Aorta (tissue), 5 donors: ENCODE measurements at regions of chr10 and their contacts with region 1.

Region 1: GRCh38 chr10:113441220-113441619 is 111.6 kb upstream of the HABP2 start:
- DNase-seq: no peak
- ATAC-seq: no peak
- H3K4me3 ChIP-seq: no peak overlapping the region
- H3K27ac ChIP-seq: no peak overlapping the region
- H3K4me1 ChIP-seq: no peaks in the 10 kb centered on the region
- H3K27me3 ChIP-seq: no peaks in the 10 kb centered on the region

Region 2: GRCh38 chr10:113397047-113397446 is 44.2 kb before region 1 on chr10:
- intact Hi-C with region 1: no loop called
- DNase-seq: no peak
- ATAC-seq: no peak
- H3K4me3 ChIP-seq: no peak overlapping the region
- H3K27ac ChIP-seq: no peak overlapping the region
- H3K4me1 ChIP-seq: no peaks in the 10 kb centered on the region
- H3K27me3 ChIP-seq: no peaks in the 10 kb centered on the region

Region 3: GRCh38 chr10:113515601-113516000 is 74.4 kb after region 1 on chr10:
- intact Hi-C with region 1: no loop called
- DNase-seq: no peak
- ATAC-seq: no peak
- H3K4me3 ChIP-seq: no peak overlapping the region
- H3K27ac ChIP-seq: no peak overlapping the region
- H3K4me1 ChIP-seq: peaks cover 3 to 4% of the 10 kb centered on the region in 2 donors
- H3K27me3 ChIP-seq: no peaks in the 10 kb centered on the region

Region 4: GRCh38 chr10:113563306-113564088 is 122.3 kb after region 1 on chr10:
- intact Hi-C with region 1: loop called in 1 of 2 experiments (anchors 10 kb)
- DNase-seq: peak; percentile 84 to 92
- ATAC-seq: peak; percentile 91
- H3K4me3 ChIP-seq: peak overlapping the region in 1 of 2 donors; percentile 14
- H3K27ac ChIP-seq: no peak overlapping the region
- H3K4me1 ChIP-seq: no peaks in the 10 kb centered on the region
- H3K27me3 ChIP-seq: no peaks in the 10 kb centered on the region